A673 (cell line): ENCODE measurements at regions of chr20 and their contacts with region 1.

Region 1: GRCh38 chr20:37384683-37385174 is 38.8 kb downstream of the SRC start:
- DNase-seq: peak; percentile 65
- H3K4me3 ChIP-seq: peak overlapping the region; percentile 52
- H3K27ac ChIP-seq: peak overlapping the region; percentile 2
- H3K4me1 ChIP-seq: no peaks in the 10 kb centered on the region
- H3K27me3 ChIP-seq: no peaks in the 10 kb centered on the region
- CTCF ChIP-seq: peak; percentile 81

Region 2: GRCh38 chr20:37270576-37271420 is 113.9 kb before region 1 on chr20:
- CTCF ChIA-PET with region 1: interaction called, 5 read pairs
- POLR2A ChIA-PET with region 1: no interaction called
- intact Hi-C with region 1: loop called (anchors 1 kb)
- DNase-seq: no peak
- H3K4me3 ChIP-seq: no peak overlapping the region
- H3K27ac ChIP-seq: no peak overlapping the region
- H3K4me1 ChIP-seq: no peaks in the 10 kb centered on the region
- H3K27me3 ChIP-seq: no peaks in the 10 kb centered on the region
- CTCF ChIP-seq: no peak

Region 3: GRCh38 chr20:37276494-37277252 is 108.1 kb before region 1 on chr20:
- CTCF ChIA-PET with region 1: no interaction called
- POLR2A ChIA-PET with region 1: interaction called, 11 read pairs
- intact Hi-C with region 1: loop called (anchors 5 kb)
- DNase-seq: peak; percentile 50
- H3K4me3 ChIP-seq: no peak overlapping the region
- H3K27ac ChIP-seq: no peak overlapping the region
- H3K4me1 ChIP-seq: no peaks in the 10 kb centered on the region
- H3K27me3 ChIP-seq: no peaks in the 10 kb centered on the region
- CTCF ChIP-seq: peak; percentile 42

Region 4: DNA sequence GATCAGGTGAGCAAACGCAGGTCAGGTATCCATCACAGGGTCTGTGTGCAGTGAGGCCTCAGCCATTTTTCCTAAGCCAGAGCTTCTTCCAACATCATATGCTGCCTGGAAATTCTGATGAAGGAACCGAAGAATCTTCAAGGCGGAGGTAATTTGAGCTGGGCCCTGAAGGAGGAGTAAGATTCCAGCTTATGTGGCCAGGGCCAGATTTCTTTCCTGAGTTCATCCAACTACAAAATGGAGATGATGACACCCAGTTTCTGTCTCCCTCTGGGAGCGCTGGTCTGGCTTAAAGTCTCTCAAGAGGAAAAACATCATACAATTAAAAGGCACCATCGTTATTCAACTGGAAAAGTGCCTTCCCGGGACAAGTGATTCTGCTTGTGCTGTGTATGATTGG is 102.2 kb before region 1 on chr20:
- CTCF ChIA-PET with region 1: no interaction called
- POLR2A ChIA-PET with region 1: interaction called, 11 read pairs
- intact Hi-C with region 1: loop called (anchors 5 kb)
- DNase-seq: peak; percentile 16
- H3K4me3 ChIP-seq: no peak overlapping the region
- H3K27ac ChIP-seq: no peak overlapping the region
- H3K4me1 ChIP-seq: no peaks in the 10 kb centered on the region
- H3K27me3 ChIP-seq: no peaks in the 10 kb centered on the region
- CTCF ChIP-seq: peak; percentile 36; the same call in 1 of the 2 replicates

Region 5: DNA sequence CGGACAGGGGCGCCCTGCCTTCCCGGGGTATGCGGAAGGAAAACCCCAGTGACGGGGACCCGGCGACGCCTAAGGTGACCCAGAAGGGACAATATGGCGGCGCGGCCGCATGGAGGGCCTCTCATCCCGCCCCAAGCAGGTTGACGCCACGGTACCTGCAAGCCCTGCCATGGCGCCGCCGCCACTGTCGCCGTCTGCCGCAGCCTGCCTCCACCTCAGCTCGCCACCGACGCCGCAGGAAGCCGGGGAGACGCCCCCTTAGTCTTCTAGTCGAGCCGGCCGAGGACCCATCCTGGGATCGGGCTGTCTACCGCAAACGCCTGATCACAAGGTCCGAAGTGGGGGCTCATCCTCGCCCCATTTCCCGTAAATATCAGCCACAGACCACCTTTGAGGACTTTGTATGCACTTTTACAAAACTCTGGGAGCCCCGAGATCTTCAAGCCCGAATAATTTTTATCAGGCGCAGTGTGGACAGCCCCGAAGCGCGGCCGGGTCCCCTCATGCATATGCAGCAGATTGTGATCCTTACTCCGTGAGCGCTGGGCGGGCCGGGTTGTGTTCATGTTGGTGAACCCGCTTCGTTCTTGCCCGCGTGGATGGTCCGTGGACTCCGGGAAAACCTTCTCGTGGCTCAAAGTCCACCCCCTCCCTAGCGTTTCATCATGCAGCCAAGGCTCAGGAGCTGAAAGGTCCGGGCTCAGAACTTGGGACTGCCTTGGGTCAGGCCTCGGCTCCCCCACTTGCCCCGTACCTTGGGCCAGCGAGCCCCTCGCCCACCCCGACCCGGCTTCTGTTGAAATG is 143.1 kb after region 1 on chr20 and contains the start of gene BLCAP:
- CTCF ChIA-PET with region 1: no interaction called
- POLR2A ChIA-PET with region 1: no interaction called
- intact Hi-C with region 1: loop called (anchors 10 kb)
- DNase-seq: peak; percentile 92
- H3K4me3 ChIP-seq: peak within 1 kb of the TSS; percentile 89
- H3K27ac ChIP-seq: peak within 1 kb of the TSS; percentile 100
- H3K4me1 ChIP-seq: peaks cover 16% of the 10 kb centered on the region
- H3K27me3 ChIP-seq: no peaks in the 10 kb centered on the region
- CTCF ChIP-seq: no peak
- total RNA-seq, gene BLCAP: 33.0 and 39.9 TPM in 2 replicates